ENCODE measurements at regions of chr19 and their contacts with region 1.

Region 1: GRCh38 chr19:49676690-49677231 is 310 bp upstream of the PRMT1 start:
- DNase-seq: peak; percentile 97 to 99 (median 98)
- H3K4me3 ChIP-seq: peak overlapping the region; percentile 69 to 79
- H3K4me3 Mint-ChIP-seq: peak overlapping the region; percentile 95 to 100 (median 99)
- H3K27ac ChIP-seq: peak overlapping the region; percentile 93
- H3K27ac Mint-ChIP-seq: peak overlapping the region; percentile 99 to 100 (median 99)
- H3K4me1 ChIP-seq: peaks cover 48% of the 10 kb centered on the region
- H3K4me1 Mint-ChIP-seq: peaks cover 19 to 54% (median 37%) of the 10 kb centered on the region in 4 donors
- H3K27me3 ChIP-seq: no peaks in the 10 kb centered on the region
- H3K27me3 Mint-ChIP-seq: no peaks in the 10 kb centered on the region

Region 2: DNA sequence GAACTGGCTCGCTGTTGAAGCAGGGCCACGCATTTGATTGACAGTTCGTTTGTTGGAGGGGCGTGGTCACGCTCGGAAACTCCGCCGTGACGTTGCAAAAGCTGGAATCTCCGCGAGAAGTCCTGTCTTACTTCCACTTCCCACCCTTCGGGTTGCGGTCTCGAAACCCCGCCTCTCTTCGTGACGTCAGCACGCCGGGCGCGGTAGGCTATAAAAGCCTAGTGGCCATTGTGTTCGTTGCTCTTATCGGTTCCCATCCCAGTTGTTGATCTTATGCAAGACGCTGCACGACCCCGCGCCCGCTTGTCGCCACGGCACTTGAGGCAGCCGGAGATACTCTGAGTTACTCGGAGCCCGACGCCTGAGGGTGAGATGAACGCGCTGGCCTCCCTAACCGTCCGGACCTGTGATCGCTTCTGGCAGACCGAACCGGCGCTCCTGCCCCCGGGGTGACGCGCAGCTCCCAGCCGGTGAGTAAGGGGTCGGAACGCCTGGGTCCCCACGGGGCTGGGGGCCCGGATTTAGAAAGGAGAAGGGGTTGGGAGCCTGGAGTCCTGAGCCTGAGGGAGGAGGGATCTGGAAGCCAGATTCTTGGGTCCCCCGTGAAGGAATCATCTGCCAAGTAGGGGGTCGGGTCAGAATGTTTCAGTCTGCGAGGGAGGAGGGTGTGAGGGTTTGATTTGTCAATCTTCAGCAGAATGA is 804.4 kb before region 1 on chr19 and contains the start of gene PPP1R15A:
- CTCF ChIA-PET with region 1: no interaction called
- POLR2A ChIA-PET with region 1: no interaction called
- intact Hi-C with region 1: loop called (anchors 2 kb)
- DNase-seq: peak; percentile 97 to 99 (median 98)
- H3K4me3 ChIP-seq: peak within 1 kb of the TSS; percentile 52 to 99
- H3K4me3 Mint-ChIP-seq: peak within 1 kb of the TSS; percentile 95 to 100 (median 99)
- H3K27ac ChIP-seq: peak within 1 kb of the TSS; percentile 100
- H3K27ac Mint-ChIP-seq: peak within 1 kb of the TSS; percentile 99 to 100 (median 100)
- H3K4me1 ChIP-seq: peaks cover 34% of the 10 kb centered on the region
- H3K4me1 Mint-ChIP-seq: peaks cover 27 to 48% (median 34%) of the 10 kb centered on the region in 4 donors
- H3K27me3 ChIP-seq: no peaks in the 10 kb centered on the region
- H3K27me3 Mint-ChIP-seq: peaks cover 0 to 6% of the 10 kb centered on the region in 2 donors
- total RNA-seq, gene PPP1R15A: 67.0 to 69.8 TPM

Region 3: DNA sequence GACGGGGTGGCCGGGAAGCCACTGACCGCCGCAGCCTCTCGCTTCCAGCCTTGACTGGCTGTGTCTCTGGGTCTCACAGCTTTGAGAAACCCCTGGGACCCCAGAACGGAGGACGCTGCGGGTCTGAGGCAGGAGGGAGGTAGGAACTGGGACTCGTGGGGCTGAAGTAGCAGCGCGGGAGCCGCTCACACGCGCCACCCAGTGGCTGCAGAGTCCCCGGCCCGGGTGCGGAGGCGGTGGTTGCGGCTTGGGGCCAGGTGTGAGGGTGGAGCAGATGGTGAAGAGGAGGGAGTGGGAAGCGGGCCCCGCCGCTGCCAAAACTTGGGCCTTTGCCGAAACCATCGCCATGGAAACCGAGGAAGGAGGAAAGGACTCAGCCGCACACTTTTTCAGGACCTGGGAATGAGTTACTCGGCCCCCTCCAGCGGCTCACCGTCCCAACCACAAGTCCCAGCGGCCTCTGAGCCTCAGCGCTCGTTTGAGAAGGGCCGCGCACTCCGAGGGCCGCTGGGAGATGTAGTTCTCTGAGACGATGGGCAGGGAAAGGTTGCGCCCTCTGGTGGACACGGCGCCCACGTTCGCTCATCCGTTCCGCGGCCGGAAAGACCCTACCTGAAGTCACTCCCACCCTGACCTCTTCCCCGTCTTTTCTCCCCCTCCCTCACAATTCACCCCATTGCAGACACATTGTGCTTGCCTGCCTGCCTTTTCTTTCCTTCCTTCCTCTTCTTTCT is 233.2 kb before region 1 on chr19:
- CTCF ChIA-PET with region 1: interaction called, 4 read pairs
- POLR2A ChIA-PET with region 1: no interaction called
- intact Hi-C with region 1: loop called (anchors 2 kb)
- DNase-seq: peak; percentile 93 to 95 (median 94)
- H3K4me3 ChIP-seq: peak overlapping the region in 1 of 2 donors; percentile 72
- H3K4me3 Mint-ChIP-seq: peak overlapping the region; percentile 78 to 93 (median 82)
- H3K27ac ChIP-seq: peak overlapping the region; percentile 25
- H3K27ac Mint-ChIP-seq: peak overlapping the region; percentile 88 to 96 (median 93)
- H3K4me1 ChIP-seq: peaks cover 31% of the 10 kb centered on the region
- H3K4me1 Mint-ChIP-seq: peaks cover 18 to 56% (median 34%) of the 10 kb centered on the region in 4 donors
- H3K27me3 ChIP-seq: peaks cover 36% of the 10 kb centered on the region
- H3K27me3 Mint-ChIP-seq: peaks cover 31 to 41% of the 10 kb centered on the region in 2 donors

Region 4: DNA sequence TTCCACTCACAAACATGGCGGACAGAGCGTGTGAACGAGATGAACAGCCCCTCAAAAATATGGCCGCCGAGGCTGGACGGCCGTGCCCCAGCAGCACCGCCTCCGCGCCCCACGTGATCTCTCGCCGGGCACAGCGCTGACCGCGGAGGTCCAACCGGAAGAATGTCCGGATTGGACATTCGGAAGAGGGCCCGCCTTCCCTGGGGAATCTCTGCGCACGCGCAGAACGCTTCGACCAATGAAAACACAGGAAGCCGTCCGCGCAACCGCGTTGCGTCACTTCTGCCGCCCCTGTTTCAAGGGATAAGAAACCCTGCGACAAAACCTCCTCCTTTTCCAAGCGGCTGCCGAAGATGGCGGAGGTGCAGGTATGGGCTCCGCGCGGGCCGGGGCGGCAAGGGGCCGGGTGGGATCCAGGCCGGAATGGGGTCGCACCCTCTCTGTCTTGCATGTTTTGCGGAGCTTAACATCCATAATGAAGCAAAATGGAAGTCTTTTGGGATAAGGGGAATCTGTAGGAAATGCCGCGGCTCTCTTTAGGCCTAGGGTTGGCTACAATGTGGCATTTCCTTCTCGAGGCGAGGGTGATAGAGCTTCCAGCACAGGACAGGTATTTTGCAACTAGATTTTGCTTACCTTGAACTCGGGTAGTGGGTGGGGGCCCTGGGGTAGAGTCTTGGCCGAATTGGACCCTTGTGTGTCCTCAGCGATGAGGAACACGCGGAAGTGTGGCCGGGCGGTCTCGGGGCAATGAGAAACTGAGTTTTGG is 189.3 kb before region 1 on chr19 and contains the start of gene RPL13A:
- CTCF ChIA-PET with region 1: no interaction called
- POLR2A ChIA-PET with region 1: interaction called, 24 read pairs
- intact Hi-C with region 1: no loop called
- DNase-seq: peak; percentile 98 to 100 (median 100)
- H3K4me3 ChIP-seq: peak within 1 kb of the TSS; percentile 98 to 99
- H3K4me3 Mint-ChIP-seq: peak within 1 kb of the TSS; percentile 94 to 100 (median 98)
- H3K27ac ChIP-seq: peak within 1 kb of the TSS; percentile 85
- H3K27ac Mint-ChIP-seq: peak within 1 kb of the TSS; percentile 95 to 98 (median 98)
- H3K4me1 ChIP-seq: peaks cover 39% of the 10 kb centered on the region
- H3K4me1 Mint-ChIP-seq: peaks cover 18 to 55% (median 36%) of the 10 kb centered on the region in 4 donors
- H3K27me3 ChIP-seq: no peaks in the 10 kb centered on the region
- H3K27me3 Mint-ChIP-seq: no peaks in the 10 kb centered on the region
- total RNA-seq, gene RPL13A: 5,517 to 5,661 TPM

Region 5: GRCh38 chr19:49570138-49570856 is 106.5 kb before region 1 on chr19:
- CTCF ChIA-PET with region 1: interaction called, 52 read pairs
- POLR2A ChIA-PET with region 1: interaction called, 51 read pairs
- intact Hi-C with region 1: loop called (anchors 1 kb)
- DNase-seq: peak; percentile 82 to 85 (median 84)
- H3K4me3 ChIP-seq: no peak overlapping the region
- H3K4me3 Mint-ChIP-seq: peak overlapping the region; percentile 68 to 91 (median 78)
- H3K27ac ChIP-seq: no peak overlapping the region
- H3K27ac Mint-ChIP-seq: peak overlapping the region; percentile 90 to 98 (median 95)
- H3K4me1 ChIP-seq: peaks cover 64% of the 10 kb centered on the region
- H3K4me1 Mint-ChIP-seq: peaks cover 34 to 64% (median 47%) of the 10 kb centered on the region in 4 donors
- H3K27me3 ChIP-seq: no peaks in the 10 kb centered on the region
- H3K27me3 Mint-ChIP-seq: no peaks in the 10 kb centered on the region

Region 6: GRCh38 chr19:49640113-49640898 is 36.5 kb before region 1 on chr19 and contains the start of gene RRAS:
- CTCF ChIA-PET with region 1: interaction called, 22 read pairs
- POLR2A ChIA-PET with region 1: interaction called, 66 read pairs
- intact Hi-C with region 1: loop called (anchors 1 kb)
- DNase-seq: peak; percentile 99 to 100 (median 100)
- H3K4me3 ChIP-seq: peak within 1 kb of the TSS; percentile 42 to 73
- H3K4me3 Mint-ChIP-seq: peak within 1 kb of the TSS; percentile 89 to 95 (median 92)
- H3K27ac ChIP-seq: peak within 1 kb of the TSS; percentile 97
- H3K27ac Mint-ChIP-seq: peak within 1 kb of the TSS; percentile 96 to 100 (median 99)
- H3K4me1 ChIP-seq: peaks cover 63% of the 10 kb centered on the region
- H3K4me1 Mint-ChIP-seq: peaks cover 44 to 73% (median 56%) of the 10 kb centered on the region in 4 donors
- H3K27me3 ChIP-seq: no peaks in the 10 kb centered on the region
- H3K27me3 Mint-ChIP-seq: no peaks in the 10 kb centered on the region
- total RNA-seq, gene RRAS: 12.0 to 13.4 TPM

Region 7: DNA sequence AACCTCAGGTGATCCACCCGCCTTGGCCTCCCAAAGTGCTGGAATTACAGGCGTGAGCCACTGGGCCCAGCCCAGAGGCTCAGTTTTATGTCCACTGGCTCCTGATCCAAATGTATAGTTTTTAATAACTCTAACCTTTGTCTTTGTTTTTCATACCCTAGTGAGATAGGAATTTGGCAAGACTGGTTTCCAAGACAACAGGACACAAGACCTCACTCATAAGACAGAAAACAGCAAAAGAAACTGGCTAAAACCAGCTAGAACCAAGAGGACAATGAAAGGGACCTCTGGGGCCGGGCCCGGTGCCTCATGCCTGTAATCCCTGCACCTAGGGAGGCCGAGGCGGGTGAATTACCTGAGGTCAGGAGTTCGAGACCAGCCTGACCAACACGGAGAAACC is 41.8 kb after region 1 on chr19:
- CTCF ChIA-PET with region 1: interaction called, 5 read pairs
- POLR2A ChIA-PET with region 1: interaction called, 10 read pairs
- intact Hi-C with region 1: no loop called
- DNase-seq: no peak
- H3K4me3 ChIP-seq: no peak overlapping the region
- H3K4me3 Mint-ChIP-seq: peak overlapping the region in 6 of 8 donors; percentile 15 to 96 (median 49)
- H3K27ac ChIP-seq: no peak overlapping the region
- H3K27ac Mint-ChIP-seq: peak overlapping the region in 5 of 7 donors; percentile 25 to 98 (median 79)
- H3K4me1 ChIP-seq: peaks cover 12% of the 10 kb centered on the region
- H3K4me1 Mint-ChIP-seq: peaks cover 7 to 12% (median 10%) of the 10 kb centered on the region in 4 donors
- H3K27me3 ChIP-seq: no peaks in the 10 kb centered on the region
- H3K27me3 Mint-ChIP-seq: no peaks in the 10 kb centered on the region